ENCODE measurements at regions of chr12 and their contacts with region 1.

Region 1: DNA sequence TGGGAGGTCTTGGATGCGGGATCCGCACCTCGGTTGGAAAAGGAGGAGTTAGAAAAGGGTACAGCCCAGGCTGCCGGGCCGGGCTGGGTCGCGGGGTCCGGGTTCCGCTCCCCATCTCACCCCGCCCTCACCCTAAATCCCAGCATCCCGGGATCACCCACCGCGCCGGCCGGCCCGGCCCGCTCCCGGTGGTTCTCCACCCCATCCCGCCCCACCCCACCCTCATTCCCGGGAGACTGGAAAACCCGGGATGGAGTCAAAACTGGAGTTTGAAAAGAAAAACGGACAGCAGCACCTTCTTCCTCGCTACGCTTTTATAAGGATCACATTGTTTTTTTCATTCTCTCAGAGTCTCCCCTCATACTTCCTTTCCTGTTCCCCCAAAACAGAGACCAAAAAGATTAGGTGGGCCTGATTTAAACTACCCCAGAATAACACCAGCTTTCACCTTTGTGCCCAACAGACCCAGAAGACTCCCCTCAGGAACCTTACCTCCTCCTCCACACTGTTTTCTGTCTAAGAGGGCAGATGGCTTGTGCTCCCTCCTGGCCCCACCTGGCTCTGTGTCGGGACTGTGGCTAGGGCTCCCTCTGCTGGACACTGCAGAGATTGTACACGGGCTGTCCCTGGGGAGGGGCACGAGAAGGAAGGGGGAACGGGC is 2.8 kb downstream of the GLI1 start:
- DNase-seq: peak; percentile 85
- H3K4me3 Mint-ChIP-seq: peak overlapping the region; percentile 86
- H3K27ac Mint-ChIP-seq: peak overlapping the region; percentile 72
- H3K4me1 Mint-ChIP-seq: peaks cover 60% of the 10 kb centered on the region
- H3K27me3 Mint-ChIP-seq: peaks cover 21% of the 10 kb centered on the region

Region 2: GRCh38 chr12:57213058-57213715 is 249.2 kb before region 1 on chr12:
- intact Hi-C with region 1: loop called (anchors 1 kb)
- DNase-seq: peak; percentile 74
- H3K4me3 Mint-ChIP-seq: no peak overlapping the region
- H3K27ac Mint-ChIP-seq: no peak overlapping the region
- H3K4me1 Mint-ChIP-seq: peaks cover 30% of the 10 kb centered on the region
- H3K27me3 Mint-ChIP-seq: peaks cover 41% of the 10 kb centered on the region

Region 3: DNA sequence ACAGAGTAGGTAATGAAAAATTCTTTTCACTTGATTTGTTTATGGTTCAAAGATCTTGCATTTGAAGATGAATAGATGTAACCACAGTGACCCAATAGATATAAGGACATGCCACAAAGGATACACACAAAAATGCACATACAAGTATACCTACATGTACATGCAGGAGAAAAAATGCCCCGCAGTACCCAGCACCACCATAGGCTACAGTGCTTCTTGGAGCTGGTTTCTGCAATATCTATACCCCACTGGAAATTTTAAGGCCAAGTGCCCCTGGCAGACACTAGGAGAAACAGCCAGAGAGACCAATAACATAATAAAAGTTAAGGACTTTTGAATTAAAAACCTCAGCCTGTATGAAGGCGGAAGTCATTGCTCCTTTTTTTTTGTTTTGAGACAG is 199.3 kb before region 1 on chr12:
- intact Hi-C with region 1: loop called (anchors 1 kb)
- DNase-seq: no peak
- H3K4me3 Mint-ChIP-seq: no peak overlapping the region
- H3K27ac Mint-ChIP-seq: no peak overlapping the region
- H3K4me1 Mint-ChIP-seq: peaks cover 7% of the 10 kb centered on the region
- H3K27me3 Mint-ChIP-seq: no peaks in the 10 kb centered on the region

Region 4: DNA sequence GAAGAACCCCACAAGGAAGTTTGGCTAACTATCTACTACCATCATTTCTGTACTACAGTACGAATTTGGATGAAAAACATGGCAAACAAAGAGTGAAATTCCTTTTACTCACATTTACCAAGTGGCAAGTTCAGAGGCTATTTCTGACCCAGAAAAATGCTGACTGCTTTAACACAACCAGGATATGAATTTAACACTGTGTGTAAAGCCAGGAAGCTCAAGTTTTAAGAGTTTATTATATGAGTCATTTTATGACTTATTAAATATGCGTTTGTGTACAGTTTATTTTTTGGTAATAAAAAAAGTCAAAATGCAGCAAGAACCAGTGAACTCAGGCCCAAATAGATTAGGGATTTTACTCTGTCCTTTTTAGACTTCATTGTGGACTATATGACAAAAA is 153.0 kb before region 1 on chr12:
- intact Hi-C with region 1: loop called (anchors 1 kb)
- DNase-seq: no peak
- H3K4me3 Mint-ChIP-seq: no peak overlapping the region
- H3K27ac Mint-ChIP-seq: peak overlapping the region; percentile 9
- H3K4me1 Mint-ChIP-seq: no peaks in the 10 kb centered on the region
- H3K27me3 Mint-ChIP-seq: no peaks in the 10 kb centered on the region

Region 5: GRCh38 chr12:57476162-57476992 is 14.0 kb after region 1 on chr12:
- intact Hi-C with region 1: loop called (anchors 1 kb)
- DNase-seq: peak; percentile 67
- H3K4me3 Mint-ChIP-seq: peak overlapping the region; percentile 93
- H3K27ac Mint-ChIP-seq: peak overlapping the region; percentile 97
- H3K4me1 Mint-ChIP-seq: peaks cover 54% of the 10 kb centered on the region
- H3K27me3 Mint-ChIP-seq: no peaks in the 10 kb centered on the region

Region 6: GRCh38 chr12:57546438-57547383 is 84.3 kb after region 1 on chr12 and contains the start of gene DCTN2:
- intact Hi-C with region 1: loop called (anchors 1 kb)
- DNase-seq: peak; percentile 93
- H3K4me3 Mint-ChIP-seq: peak within 1 kb of the TSS; percentile 100
- H3K27ac Mint-ChIP-seq: peak within 1 kb of the TSS; percentile 97
- H3K4me1 Mint-ChIP-seq: peaks cover 49% of the 10 kb centered on the region
- H3K27me3 Mint-ChIP-seq: peaks cover 13% of the 10 kb centered on the region
- total RNA-seq, gene DCTN2: 78.6 and 83.5 TPM in 2 replicates